ENCODE measurements at regions of chr11 and their contacts with region 1.

Region 1: DNA sequence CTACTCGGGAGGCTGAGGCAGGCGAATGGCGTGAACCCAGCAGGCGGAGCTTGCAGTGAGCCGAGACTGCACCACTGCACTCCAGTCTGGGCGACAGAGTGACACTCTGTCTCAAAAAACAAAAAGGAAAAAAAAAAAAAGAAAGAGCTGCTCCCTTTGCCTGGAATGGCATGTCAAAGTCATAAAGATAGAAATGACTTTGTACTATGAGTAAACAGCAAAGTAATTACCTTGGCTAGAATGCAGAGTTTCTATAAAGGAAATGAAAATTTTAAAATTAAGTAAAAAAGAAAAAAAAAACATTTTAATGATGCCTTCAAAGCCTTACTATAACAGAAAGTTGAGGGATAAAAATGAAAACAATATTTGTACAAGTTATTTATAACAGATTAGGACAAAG is 10.1 kb downstream of the PPP2R1B start:
- DNase-seq: no peak
- H3K4me3 ChIP-seq: no peak overlapping the region
- H3K27ac ChIP-seq: no peak overlapping the region
- H3K4me1 ChIP-seq: no peaks in the 10 kb centered on the region
- H3K27me3 ChIP-seq: no peaks in the 10 kb centered on the region
- CTCF ChIP-seq: no peak

Region 2: DNA sequence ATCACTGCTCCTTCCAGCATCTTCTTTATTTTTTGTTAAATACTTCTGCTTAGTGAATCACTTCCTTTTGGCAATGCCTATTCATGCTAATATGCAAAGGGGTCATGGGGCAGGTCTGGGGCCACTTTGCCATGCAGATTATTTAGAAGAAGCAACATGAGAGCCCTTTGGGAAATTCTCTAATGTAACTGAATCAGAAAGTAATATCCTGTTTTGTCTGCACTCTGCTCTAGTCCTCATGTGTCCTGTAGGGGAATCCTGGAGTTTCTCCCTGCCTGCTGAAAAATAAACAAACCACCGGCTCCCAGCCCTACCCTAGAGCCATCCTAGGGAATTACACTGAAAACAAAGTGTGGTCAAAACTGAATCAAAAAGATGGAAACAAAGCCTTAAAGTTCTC is 687.0 kb before region 1 on chr11:
- CTCF ChIA-PET with region 1: no interaction called
- POLR2A ChIA-PET with region 1: no interaction called
- intact Hi-C with region 1: no loop called
- DNase-seq: peak; percentile 36
- H3K4me3 ChIP-seq: no peak overlapping the region
- H3K27ac ChIP-seq: no peak overlapping the region
- H3K4me1 ChIP-seq: no peaks in the 10 kb centered on the region
- H3K27me3 ChIP-seq: no peaks in the 10 kb centered on the region
- CTCF ChIP-seq: peak; percentile 39; the same call in 1 of the 2 replicates

Region 3: GRCh38 chr11:111422494-111423249 is 333.4 kb before region 1 on chr11:
- CTCF ChIA-PET with region 1: no interaction called
- POLR2A ChIA-PET with region 1: no interaction called
- intact Hi-C with region 1: no loop called
- DNase-seq: peak; percentile 82
- H3K4me3 ChIP-seq: no peak overlapping the region
- H3K27ac ChIP-seq: no peak overlapping the region
- H3K4me1 ChIP-seq: peaks cover 15% of the 10 kb centered on the region
- H3K27me3 ChIP-seq: no peaks in the 10 kb centered on the region
- CTCF ChIP-seq: peak; percentile 99

Region 4: DNA sequence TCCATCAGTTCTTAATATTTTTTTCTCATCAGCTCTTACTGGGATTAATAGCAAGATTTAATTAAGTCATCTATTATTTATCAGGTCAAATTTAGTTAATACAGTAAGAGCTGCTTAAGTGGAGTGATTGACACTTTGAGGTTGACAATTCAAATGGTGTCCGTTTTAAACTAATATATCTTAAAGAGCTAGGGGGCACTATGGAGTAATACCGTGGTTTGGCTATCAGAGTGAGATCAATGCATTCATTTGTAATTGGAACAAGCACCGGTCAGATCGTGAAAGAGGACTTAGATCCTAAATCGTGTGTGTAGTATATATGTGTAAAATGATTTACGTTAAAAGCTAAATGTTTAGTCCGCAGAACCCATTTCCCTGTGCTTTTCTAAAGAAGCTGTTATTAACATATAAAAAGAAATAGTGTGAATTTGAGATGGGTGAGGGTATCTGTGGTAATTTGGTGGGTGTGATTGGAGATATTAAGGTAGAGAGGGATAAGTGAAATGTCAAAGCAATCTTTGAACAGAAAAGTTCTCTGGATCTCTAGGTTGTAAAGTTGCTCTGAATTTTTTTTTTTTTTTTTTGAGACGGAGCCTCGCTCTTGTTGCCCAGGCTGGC is 151.6 kb before region 1 on chr11:
- CTCF ChIA-PET with region 1: no interaction called
- POLR2A ChIA-PET with region 1: no interaction called
- intact Hi-C with region 1: no loop called
- DNase-seq: peak; percentile 84
- H3K4me3 ChIP-seq: peak overlapping the region; percentile 75
- H3K27ac ChIP-seq: no peak overlapping the region
- H3K4me1 ChIP-seq: peaks cover 39% of the 10 kb centered on the region
- H3K27me3 ChIP-seq: no peaks in the 10 kb centered on the region
- CTCF ChIP-seq: peak; percentile 84

Region 5: GRCh38 chr11:111846636-111847035 is 90.5 kb after region 1 on chr11:
- CTCF ChIA-PET with region 1: no interaction called
- POLR2A ChIA-PET with region 1: interaction called, 11 read pairs
- intact Hi-C with region 1: no loop called
- DNase-seq: peak; percentile 64
- H3K4me3 ChIP-seq: no peak overlapping the region
- H3K27ac ChIP-seq: peak overlapping the region; percentile 59
- H3K4me1 ChIP-seq: peaks cover 22% of the 10 kb centered on the region
- H3K27me3 ChIP-seq: no peaks in the 10 kb centered on the region
- CTCF ChIP-seq: no peak

Measured in A673 (cell line).